A673 (cell line): ENCODE measurements at regions of chr20 and their contacts with region 1.

Region 1: DNA sequence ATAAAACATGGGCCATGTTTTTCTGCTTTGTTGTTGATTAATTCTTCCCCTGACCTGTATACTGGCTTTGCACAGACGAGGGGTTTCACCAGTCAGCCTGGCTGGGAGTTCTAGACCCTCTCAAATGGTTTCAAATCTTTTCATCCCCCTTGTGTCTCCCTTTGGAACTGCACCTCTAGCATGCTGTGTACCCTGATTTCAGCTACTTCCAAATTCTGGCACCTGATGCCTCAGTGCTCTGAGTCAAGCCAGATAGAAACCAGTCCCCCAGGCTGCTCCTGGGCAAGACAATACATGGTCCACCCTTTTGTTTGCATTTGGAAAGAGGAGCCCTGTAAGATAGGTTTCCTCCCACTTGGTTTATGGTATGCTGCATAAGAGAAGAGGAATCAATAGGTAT is 290.2 kb downstream of the BTBD3 start:
- DNase-seq: peak; percentile 54
- H3K4me3 ChIP-seq: no peak overlapping the region
- H3K27ac ChIP-seq: no peak overlapping the region
- H3K4me1 ChIP-seq: no peaks in the 10 kb centered on the region
- H3K27me3 ChIP-seq: no peaks in the 10 kb centered on the region
- CTCF ChIP-seq: peak; percentile 64

Region 2: DNA sequence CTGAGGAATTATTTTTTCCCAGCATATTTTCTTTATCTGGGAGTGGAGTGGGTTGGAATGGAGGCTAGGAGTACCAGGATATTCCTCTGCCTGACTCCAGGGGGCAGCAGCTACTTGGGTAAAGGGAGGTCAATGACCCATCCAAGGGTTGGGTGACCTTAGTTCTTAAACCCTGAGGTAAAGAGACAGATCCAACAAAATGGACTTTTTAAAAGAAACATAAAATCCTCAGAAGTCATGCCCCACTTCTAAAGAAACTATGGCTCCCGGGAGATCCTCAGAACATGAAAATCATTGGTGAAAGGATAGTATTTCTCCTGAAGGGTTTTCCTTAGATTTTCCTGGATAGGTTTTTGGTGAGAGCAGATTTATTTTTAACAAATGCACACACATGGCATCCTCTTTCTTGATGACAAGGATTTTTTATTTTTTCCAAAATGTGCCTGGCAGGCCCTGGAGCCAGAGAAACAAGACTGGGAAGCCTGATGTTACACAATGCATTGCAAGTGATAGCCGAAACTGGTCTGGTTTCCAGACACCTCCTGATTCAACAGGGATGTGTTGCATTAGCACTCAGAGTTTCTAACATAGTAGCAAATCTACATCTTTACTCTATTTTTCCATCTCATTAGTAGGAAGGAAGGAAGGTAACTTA is 531.1 kb before region 1 on chr20:
- CTCF ChIA-PET with region 1: no interaction called
- POLR2A ChIA-PET with region 1: no interaction called
- intact Hi-C with region 1: loop called (anchors 5 kb)
- DNase-seq: peak; percentile 28
- H3K4me3 ChIP-seq: no peak overlapping the region
- H3K27ac ChIP-seq: no peak overlapping the region
- H3K4me1 ChIP-seq: no peaks in the 10 kb centered on the region
- H3K27me3 ChIP-seq: peaks cover 33% of the 10 kb centered on the region
- CTCF ChIP-seq: peak; percentile 83

Region 3: DNA sequence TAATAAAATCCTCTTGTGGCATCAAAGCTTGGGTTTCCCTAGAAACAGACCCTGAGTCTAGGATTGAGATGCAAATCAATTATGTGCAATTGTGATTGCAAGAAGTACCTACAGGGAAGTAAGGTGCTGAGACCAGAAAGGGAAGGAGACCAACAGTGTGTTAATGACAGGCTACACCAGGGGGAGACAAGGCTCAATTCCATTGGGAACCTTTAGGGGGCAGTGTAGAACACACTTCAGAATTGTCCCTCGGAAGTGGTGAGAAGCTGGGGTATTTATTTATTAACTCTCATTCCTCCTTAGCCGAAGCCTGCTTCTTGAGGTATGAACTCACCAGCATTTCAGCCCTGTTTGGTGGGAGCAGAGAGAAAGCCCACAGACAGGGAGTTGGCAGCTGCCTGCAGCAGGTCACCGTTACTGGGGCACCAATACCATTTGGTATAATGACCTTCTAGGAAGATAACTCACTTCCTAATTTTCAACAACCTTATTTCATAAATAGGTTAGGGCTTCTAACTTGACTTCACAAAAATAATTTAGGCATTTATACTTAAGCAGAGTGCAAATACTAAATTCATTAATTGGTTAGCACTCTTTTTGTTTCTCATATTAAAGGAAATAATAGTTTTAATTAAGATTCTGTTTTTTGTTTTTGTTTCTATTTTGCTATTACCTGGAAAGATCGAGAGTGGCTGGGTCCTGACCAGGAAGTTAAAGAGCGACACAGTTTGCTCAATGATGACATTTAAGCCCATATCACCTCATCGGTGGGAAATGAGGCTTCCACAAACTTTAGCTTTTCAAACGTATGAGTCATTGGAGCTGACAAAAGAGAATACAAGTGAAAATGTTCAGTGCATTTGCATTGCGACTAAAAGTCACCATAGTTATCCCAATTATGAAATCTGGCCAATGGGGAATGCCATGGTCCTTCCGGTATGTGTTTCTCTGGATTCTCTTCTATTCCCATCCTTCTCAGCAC is 195.3 kb before region 1 on chr20:
- CTCF ChIA-PET with region 1: interaction called, 4 read pairs
- POLR2A ChIA-PET with region 1: no interaction called
- intact Hi-C with region 1: loop called (anchors 5 kb)
- DNase-seq: peak; percentile 72
- H3K4me3 ChIP-seq: no peak overlapping the region
- H3K27ac ChIP-seq: no peak overlapping the region
- H3K4me1 ChIP-seq: no peaks in the 10 kb centered on the region
- H3K27me3 ChIP-seq: no peaks in the 10 kb centered on the region
- CTCF ChIP-seq: peak; percentile 95

Region 4: GRCh38 chr20:12023194-12023795 is 184.6 kb before region 1 on chr20:
- CTCF ChIA-PET with region 1: no interaction called
- POLR2A ChIA-PET with region 1: no interaction called
- intact Hi-C with region 1: no loop called
- DNase-seq: no peak
- H3K4me3 ChIP-seq: no peak overlapping the region
- H3K27ac ChIP-seq: no peak overlapping the region
- H3K4me1 ChIP-seq: no peaks in the 10 kb centered on the region
- H3K27me3 ChIP-seq: no peaks in the 10 kb centered on the region
- CTCF ChIP-seq: no peak